AG04450 (cell line): ENCODE measurements at regions of chr2 and their contacts with region 1.

Region 1: DNA sequence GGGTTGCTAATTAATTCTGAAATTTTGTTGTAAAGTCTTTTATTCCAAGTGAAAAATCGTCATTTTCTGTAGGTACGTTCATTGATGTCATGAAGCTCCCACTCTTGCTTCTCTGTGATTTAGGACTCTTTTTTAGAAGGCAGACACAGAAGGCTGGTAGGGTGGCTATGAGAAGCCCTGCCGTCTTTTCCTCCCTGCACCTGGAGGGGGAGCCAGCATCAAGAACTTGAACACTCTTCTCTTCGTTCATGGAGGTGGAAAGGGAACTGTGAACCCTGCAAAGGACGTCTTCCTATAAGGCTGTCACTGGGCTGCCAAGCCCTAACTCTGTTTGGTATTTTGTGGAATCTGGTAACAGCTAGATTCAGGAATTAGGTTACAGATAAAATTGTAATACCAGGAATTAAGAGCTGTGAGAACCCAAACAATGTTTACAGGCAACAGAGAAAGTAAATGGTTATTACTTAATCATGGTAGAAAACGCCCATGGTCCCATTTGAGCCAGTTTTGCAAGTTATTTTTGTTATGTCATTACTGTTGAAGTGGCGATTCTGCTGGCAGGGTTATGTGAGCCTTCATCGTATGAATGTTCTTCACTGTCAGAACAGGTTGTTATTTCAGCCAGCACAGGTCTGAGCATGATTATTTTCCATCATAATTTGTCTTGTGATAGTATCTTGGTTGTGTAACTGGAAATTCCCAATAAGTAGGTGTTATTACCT is 112.2 kb downstream of the OSBPL6 start:
- DNase-seq: no peak
- H3K4me3 ChIP-seq: no peak overlapping the region
- H3K27ac ChIP-seq: no peak overlapping the region
- H3K27me3 ChIP-seq: no peaks in the 10 kb centered on the region
- CTCF ChIP-seq: peak; percentile 75

Region 2: DNA sequence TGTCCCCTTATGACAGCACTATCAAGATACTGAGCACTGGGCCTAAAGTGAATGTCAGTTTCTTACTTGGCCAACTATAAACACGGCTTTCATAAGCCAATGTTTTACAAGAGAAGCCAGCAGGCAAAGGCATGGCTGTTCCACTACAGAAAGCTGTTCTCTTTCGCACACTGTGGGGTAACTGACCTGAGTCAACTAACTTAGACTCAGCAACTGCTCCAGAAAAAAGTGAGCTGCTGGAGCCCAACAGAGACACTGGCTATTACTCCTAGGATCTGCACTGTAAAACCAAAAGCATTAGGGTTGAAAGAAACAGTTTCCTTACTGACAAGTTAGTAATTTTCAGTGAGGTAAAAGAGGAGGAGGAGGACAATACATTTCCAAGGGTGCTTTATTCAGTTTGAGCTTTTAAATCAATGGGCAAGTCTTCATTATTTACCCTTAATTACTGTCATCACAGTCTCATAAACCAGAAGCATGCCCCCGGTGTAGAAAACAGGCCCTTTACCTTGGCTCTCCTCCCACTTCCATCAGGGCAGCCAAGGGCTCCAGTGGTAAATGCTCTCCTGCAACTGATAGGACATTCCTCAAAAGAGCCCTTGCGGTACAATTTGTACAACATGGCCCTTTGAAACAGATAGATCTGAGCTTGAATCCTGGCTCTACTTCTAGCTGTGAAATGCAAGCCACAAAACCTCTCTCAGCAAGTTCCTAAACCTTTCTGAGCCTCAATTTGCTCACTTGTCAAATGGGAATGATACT is 509.7 kb before region 1 on chr2:
- CTCF ChIA-PET with region 1: no interaction called
- POLR2A ChIA-PET with region 1: no interaction called
- DNase-seq: no peak
- H3K4me3 ChIP-seq: no peak overlapping the region
- H3K27ac ChIP-seq: no peak overlapping the region
- H3K27me3 ChIP-seq: no peaks in the 10 kb centered on the region
- CTCF ChIP-seq: no peak

Region 3: GRCh38 chr2:178317811-178318210 is 11.3 kb after region 1 on chr2:
- CTCF ChIA-PET with region 1: interaction called, 17 read pairs
- POLR2A ChIA-PET with region 1: no interaction called
- DNase-seq: no peak
- H3K4me3 ChIP-seq: no peak overlapping the region
- H3K27ac ChIP-seq: no peak overlapping the region
- H3K27me3 ChIP-seq: no peaks in the 10 kb centered on the region
- CTCF ChIP-seq: no peak